Body of pancreas (tissue), 4 donors: ENCODE measurements at regions of chr13 and their contacts with region 1.

Region 1: GRCh38 chr13:53068585-53069520 is 40.2 kb downstream of the OLFM4 start:
- DNase-seq: no peak
- ATAC-seq: peak; percentile 61
- H3K4me3 ChIP-seq: no peak overlapping the region
- H3K27ac ChIP-seq: no peak overlapping the region
- H3K4me1 ChIP-seq: peaks cover 21% of the 10 kb centered on the region
- H3K27me3 ChIP-seq: no peaks in the 10 kb centered on the region
- CTCF ChIP-seq: peak in 4 of 7 experiments; percentile 34 to 54 (median 40)
- POLR2A ChIP-seq: no peak

Region 2: DNA sequence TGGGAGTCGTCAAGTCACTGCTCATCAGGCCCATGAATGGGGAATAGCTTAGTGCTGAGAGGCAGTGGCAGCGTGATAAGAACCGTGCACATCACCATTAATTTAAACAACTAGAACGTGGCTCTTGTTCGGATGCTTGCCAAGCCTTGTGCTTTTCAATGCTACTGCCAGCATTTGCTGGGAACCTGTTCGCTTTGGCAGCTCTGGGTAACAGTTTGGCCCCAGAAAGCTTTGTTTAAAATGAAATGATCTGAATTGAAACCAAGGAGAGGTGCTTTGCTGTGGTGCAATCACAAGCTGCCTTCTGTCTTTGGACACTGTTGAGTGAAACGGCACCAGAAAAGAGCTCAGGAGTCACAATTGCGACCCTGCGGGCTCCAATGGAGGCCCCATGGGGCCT is 93.7 kb before region 1 on chr13:
- intact Hi-C with region 1: loop called (anchors 10 kb)
- DNase-seq: no peak
- ATAC-seq: no peak
- H3K4me3 ChIP-seq: no peak overlapping the region
- H3K27ac ChIP-seq: no peak overlapping the region
- H3K4me1 ChIP-seq: peaks cover 14% of the 10 kb centered on the region
- H3K27me3 ChIP-seq: no peaks in the 10 kb centered on the region
- CTCF ChIP-seq: no peak
- POLR2A ChIP-seq: no peak

Region 3: DNA sequence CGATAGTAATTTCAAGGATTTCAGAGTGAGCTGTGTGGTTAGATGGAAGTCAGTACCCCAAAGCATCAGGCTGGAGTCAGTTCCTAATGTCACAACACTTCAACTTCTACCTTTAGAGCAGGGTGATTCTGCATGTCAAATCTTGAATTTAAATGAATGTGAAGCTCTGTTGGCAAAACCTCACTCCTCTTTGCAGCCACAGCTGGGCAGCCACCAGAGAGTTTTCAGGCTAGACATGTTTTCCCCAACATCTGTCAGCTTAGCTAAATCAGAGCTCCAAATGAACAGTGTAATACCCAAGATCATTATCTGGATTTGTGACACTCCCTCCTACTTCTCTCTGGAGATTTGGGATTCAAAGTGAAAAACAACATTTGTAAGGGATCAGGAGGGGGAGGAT is 74.0 kb before region 1 on chr13:
- intact Hi-C with region 1: no loop called
- DNase-seq: no peak
- ATAC-seq: no peak
- H3K4me3 ChIP-seq: no peak overlapping the region
- H3K27ac ChIP-seq: no peak overlapping the region
- H3K4me1 ChIP-seq: peaks cover 26% of the 10 kb centered on the region
- H3K27me3 ChIP-seq: no peaks in the 10 kb centered on the region
- CTCF ChIP-seq: no peak
- POLR2A ChIP-seq: no peak

Region 4: DNA sequence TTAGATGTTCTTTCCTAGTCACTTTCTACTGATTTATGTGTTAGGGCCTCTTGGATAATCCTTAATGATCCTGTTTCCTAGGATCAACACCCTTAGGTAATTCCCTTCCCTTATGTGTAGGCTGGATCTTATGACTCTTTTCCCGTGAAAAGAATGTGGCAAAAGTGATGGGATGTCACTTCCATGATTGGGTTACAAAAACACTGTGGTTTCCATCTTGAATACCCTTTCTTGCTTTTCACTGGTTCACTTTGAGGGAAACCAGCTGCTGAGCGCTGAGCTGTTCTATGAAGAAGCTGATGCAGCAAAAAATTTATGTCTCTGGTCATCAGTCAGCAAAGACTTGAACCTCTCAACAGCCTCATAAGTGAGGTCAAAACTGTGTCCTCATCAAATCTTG is 569.2 kb after region 1 on chr13:
- intact Hi-C with region 1: no loop called
- DNase-seq: no peak
- ATAC-seq: no peak
- H3K4me3 ChIP-seq: no peak overlapping the region
- H3K27ac ChIP-seq: no peak overlapping the region
- H3K4me1 ChIP-seq: no peaks in the 10 kb centered on the region
- H3K27me3 ChIP-seq: no peaks in the 10 kb centered on the region
- CTCF ChIP-seq: no peak
- POLR2A ChIP-seq: no peak